Testis (tissue), 5 donors: ENCODE measurements at regions of chr17 and their contacts with region 1.

Region 1: GRCh38 chr17:1908699-1909309 is 79.0 kb downstream of the RPA1 start:
- DNase-seq: peak; percentile 81
- H3K4me3 ChIP-seq: peak overlapping the region in 1 of 2 donors; percentile 4
- H3K27ac ChIP-seq: no peak overlapping the region
- H3K4me1 ChIP-seq: no peaks in the 10 kb centered on the region
- H3K27me3 ChIP-seq: no peaks in the 10 kb centered on the region
- CTCF ChIP-seq: peak; percentile 74 to 81 (median 77)
- POLR2A ChIP-seq: no peak

Region 2: DNA sequence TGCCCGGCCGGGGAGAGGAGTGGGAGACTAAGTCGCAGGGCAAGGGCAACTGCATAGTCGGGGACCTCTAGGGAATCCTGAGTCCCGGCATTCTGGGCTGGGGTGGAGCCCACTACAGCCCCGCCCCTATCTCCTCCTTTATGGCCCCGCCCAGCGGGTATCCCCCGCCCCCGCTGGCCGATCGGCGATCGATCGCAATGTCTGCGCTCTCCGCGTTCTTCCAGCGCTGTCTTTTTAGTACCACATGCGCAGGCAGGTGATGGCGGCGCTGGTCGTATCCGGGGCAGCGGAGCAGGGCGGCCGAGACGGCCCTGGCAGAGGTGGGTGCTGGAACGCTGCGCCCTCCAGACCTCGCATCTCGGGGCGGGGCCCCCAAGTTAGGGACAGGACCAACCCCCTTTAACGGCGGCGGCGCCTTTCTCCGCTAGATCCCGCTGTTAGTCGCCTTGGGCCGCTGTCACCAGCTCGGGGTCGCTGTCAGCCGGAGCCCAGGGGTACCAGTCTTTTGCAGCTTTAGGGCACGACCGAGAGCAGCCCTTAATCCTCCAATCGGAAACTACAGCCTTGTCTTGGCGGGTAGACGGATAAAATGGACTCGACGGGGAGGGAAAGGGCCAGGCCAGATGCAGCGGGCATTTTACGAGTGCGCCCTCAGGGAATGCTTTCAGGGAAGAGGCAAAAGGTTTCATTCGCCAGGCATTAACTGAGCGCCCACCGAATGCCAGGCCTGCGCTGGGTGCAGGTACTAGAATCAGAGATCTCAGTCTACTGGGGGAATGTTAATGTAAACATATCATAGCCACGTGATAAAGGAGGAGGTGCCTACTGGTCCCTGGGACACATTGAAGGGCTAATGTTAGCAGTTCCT is 121.3 kb after region 1 on chr17 and contains the start of gene DPH1:
- intact Hi-C with region 1: loop called (anchors 5 kb)
- DNase-seq: peak; percentile 94
- H3K4me3 ChIP-seq: peak within 1 kb of the TSS; percentile 98 to 100
- H3K27ac ChIP-seq: peak within 1 kb of the TSS; percentile 69 to 72
- H3K4me1 ChIP-seq: peaks cover 17% of the 10 kb centered on the region
- H3K27me3 ChIP-seq: no peaks in the 10 kb centered on the region
- CTCF ChIP-seq: peak in 1 of 3 experiments; percentile 26
- POLR2A ChIP-seq: no peak
- total RNA-seq, gene DPH1: 91.9 to 93.3 TPM